ENCODE measurements at regions of chr4 and their contacts with region 1.

Region 1: DNA sequence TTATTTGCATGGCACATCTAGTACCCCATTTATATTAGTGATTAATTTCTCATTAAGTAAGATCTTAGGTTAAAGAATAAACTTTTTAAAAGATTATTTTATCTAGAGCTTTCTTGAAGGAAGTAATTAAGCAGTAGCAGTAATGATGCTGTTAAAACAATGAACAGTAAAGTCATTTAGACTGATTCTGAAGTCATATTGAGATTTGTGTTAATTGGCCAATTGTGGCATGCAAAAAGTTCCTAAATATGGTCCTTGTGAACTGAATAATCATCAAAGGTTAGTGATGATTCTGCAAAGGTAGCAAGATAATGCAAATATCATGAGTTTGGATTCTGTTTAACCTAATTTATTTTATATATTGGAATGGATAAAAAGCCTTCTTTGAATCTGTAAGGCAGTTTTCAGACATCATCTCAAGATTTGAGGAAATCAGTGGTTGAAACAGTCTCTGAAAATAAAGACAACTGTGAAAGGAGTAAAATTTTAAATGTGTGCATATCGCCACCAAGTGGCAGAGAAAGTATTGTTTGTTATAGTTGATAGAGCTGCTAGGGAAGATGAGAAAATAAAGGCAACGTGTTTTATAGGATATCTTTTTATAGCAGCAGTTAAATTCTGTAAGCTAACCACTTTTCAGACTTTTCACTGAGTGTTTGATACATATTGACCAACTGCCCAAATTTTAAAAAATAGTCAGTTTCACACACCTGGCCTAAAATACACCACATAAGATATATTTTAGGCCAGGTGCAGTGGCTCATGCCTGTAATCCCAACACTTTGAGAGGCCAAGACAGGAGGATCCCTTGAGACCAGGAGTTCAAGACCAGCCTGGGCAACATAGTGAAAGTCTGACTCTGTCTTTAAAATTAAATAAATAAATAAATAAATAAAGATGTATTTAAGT is 79.6 kb downstream of the CCKAR start:
- DNase-seq: no peak
- ATAC-seq: peak; percentile 39 to 63
- H3K4me3 ChIP-seq: no peak overlapping the region
- H3K27ac ChIP-seq: no peak overlapping the region
- H3K4me1 ChIP-seq: peaks cover 3% of the 10 kb centered on the region
- H3K27me3 ChIP-seq: no peaks in the 10 kb centered on the region

Region 2: DNA sequence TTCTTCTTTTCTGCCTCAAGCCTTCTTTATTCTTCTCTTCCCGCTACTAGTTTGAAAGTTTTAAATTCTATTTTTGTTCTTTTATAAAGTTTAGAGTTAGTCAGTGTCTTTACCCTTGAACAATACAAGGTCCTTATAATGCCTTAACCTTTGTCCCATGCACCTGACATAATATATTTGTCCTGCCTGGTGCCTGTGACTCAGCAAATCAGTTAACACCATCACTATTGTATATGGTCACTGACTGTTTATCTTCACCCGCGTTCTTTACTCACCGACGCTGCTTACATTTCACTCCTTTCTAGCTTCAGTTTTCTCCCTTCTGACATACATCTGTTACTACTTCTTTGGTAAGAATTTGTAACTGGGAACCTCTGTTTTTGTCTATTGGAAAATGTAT is 491.0 kb before region 1 on chr4:
- intact Hi-C with region 1: loop called in 1 of 4 experiments (anchors 5 kb)
- DNase-seq: no peak
- ATAC-seq: no peak
- H3K4me3 ChIP-seq: no peak overlapping the region
- H3K27ac ChIP-seq: no peak overlapping the region
- H3K4me1 ChIP-seq: peaks cover 17% of the 10 kb centered on the region
- H3K27me3 ChIP-seq: no peaks in the 10 kb centered on the region

Region 3: DNA sequence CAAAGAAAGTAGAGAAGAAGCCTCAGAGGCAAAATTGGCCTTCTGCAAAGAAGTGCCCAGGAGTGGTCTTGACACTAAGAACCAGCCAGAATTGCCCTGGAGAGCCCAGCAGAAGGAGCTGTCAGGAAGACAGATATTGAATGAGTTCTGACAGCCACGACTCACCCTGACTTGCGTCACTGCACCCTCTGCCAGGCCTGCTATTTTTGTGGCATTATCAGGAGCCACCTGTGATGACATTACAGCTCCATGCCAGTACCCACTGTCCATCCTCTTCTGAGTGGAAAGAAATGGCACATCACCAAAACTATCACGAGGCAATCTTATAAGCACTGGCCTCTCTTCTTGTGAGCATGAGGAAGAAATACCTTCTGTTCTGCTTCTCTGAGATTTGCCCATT is 428.9 kb before region 1 on chr4:
- intact Hi-C with region 1: loop called in 3 of 4 experiments (anchors 10 kb)
- DNase-seq: peak; percentile 59 to 73 (median 73)
- ATAC-seq: peak; percentile 90 to 94
- H3K4me3 ChIP-seq: no peak overlapping the region
- H3K27ac ChIP-seq: peak overlapping the region; percentile 72
- H3K4me1 ChIP-seq: no peaks in the 10 kb centered on the region
- H3K27me3 ChIP-seq: no peaks in the 10 kb centered on the region

Region 4: GRCh38 chr4:26028793-26029567 is 381.7 kb before region 1 on chr4:
- intact Hi-C with region 1: loop called in 2 of 4 experiments (anchors 5 to 10 kb)
- DNase-seq: peak; percentile 77 to 92 (median 91)
- ATAC-seq: peak; percentile 91 to 94
- H3K4me3 ChIP-seq: peak overlapping the region; percentile 6
- H3K27ac ChIP-seq: no peak overlapping the region
- H3K4me1 ChIP-seq: no peaks in the 10 kb centered on the region
- H3K27me3 ChIP-seq: no peaks in the 10 kb centered on the region

Region 5: DNA sequence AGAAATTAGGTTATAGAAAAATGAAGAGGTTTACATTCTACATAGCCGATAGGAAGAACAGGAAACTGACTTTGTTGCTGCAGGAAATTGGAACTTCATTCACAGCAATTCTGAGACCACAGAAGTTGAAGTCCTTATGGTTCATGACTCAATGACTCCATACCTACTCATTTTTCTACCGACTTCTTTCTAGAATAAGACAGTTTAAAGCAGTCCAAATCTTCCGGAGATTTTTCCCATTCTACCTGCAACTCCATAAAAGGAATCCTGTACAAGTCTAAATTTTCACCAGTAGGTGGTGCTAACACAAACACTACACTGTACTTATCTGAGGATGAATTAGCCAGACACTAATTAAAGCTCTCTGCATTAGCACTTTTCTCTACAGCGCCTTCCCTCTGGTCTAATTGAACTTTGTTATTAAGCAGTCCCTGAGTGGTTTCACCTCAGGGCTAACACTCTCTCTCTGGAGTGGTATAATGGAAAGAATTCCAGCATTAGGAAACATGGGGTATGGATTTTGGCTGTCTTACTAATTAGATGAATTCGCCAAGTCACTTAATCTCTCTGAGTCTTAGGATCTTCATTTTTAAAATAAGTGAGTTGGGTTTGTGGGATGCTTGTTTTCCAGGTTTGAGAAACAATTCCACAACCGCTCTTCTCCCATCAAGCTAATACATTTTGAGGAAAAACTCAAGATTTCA is 328.7 kb before region 1 on chr4:
- intact Hi-C with region 1: loop called in 2 of 4 experiments (anchors 5 kb)
- DNase-seq: no peak
- ATAC-seq: peak; percentile 49 to 77
- H3K4me3 ChIP-seq: no peak overlapping the region
- H3K27ac ChIP-seq: no peak overlapping the region
- H3K4me1 ChIP-seq: peaks cover 4% of the 10 kb centered on the region
- H3K27me3 ChIP-seq: no peaks in the 10 kb centered on the region

Region 6: DNA sequence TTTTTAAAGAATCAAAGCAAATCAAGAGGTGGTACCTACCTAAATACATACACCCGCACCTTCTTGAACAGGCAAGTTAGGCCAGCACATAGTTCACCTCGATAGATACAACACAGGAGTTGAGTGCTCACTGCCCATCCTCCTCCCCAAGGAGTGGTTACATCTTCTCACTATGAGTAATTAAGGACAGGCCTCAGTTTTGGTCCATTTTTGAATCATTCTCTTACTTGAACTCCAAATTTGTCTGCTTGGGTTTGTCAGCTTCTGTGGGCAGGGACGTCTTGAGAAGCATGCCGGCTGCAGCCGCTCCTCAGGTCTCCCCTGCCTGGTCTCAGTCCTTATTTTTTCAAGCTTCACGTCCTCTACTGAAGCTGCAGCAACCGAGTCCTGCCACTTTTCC is 280.5 kb before region 1 on chr4:
- intact Hi-C with region 1: no loop called
- DNase-seq: no peak
- ATAC-seq: no peak
- H3K4me3 ChIP-seq: no peak overlapping the region
- H3K27ac ChIP-seq: no peak overlapping the region
- H3K4me1 ChIP-seq: no peaks in the 10 kb centered on the region
- H3K27me3 ChIP-seq: no peaks in the 10 kb centered on the region

Region 7: GRCh38 chr4:26320538-26321325 is 89.9 kb before region 1 on chr4 and contains the start of gene RBPJ:
- intact Hi-C with region 1: loop called in 1 of 4 experiments (anchors 10 kb)
- DNase-seq: peak; percentile 92 to 96 (median 96)
- ATAC-seq: peak; percentile 87 to 91
- H3K4me3 ChIP-seq: peak within 1 kb of the TSS; percentile 98
- H3K27ac ChIP-seq: peak within 1 kb of the TSS; percentile 95
- H3K4me1 ChIP-seq: no peaks in the 10 kb centered on the region
- H3K27me3 ChIP-seq: no peaks in the 10 kb centered on the region
- total RNA-seq, gene RBPJ: 42.1 to 45.9 (median 44.2) TPM

Region 8: GRCh38 chr4:26330186-26330787 is 80.4 kb before region 1 on chr4:
- intact Hi-C with region 1: loop called in 2 of 4 experiments (anchors 5 to 10 kb)
- DNase-seq: no peak
- ATAC-seq: peak; percentile 67 to 68
- H3K4me3 ChIP-seq: no peak overlapping the region
- H3K27ac ChIP-seq: no peak overlapping the region
- H3K4me1 ChIP-seq: peaks cover 8% of the 10 kb centered on the region
- H3K27me3 ChIP-seq: no peaks in the 10 kb centered on the region

Region 9: DNA sequence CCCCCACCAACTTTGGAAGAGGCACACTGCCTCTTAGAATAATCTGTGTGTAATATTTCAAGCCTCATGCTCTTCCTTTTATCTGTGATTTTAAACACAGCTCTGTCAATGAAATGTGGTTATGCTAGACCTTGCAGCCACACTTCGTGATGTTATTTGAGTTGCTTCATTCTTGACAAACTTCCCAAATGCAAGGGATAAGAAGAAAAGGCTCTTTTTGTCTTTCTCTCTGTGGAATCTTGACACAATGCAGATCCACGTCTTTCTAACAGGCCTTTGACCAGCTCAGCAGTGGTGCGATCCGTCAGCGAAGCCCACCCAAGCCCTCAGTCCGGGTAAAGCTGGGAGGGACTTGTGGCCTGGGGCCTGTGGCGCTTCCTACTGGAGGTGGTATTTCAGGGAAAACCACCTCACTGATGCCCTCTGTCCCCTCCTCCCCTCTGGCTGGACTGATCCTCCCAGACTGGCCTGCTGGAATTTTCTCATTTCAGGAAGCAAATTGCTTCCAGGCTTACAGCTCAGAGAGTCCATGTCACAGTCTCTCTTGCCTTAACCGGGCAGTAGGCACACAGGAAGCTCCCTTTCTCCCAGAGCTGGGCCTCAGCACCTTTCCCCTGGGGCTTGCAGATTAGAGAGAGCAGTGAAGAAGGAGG is 99.2 kb after region 1 on chr4:
- intact Hi-C with region 1: no loop called
- DNase-seq: no peak
- ATAC-seq: peak in 1 of 2 donors; percentile 20
- H3K4me3 ChIP-seq: no peak overlapping the region
- H3K27ac ChIP-seq: no peak overlapping the region
- H3K4me1 ChIP-seq: no peaks in the 10 kb centered on the region
- H3K27me3 ChIP-seq: no peaks in the 10 kb centered on the region

Measured in right cardiac atrium (tissue), 5 donors.